ENCODE measurements at regions of chr15 and their contacts with region 1.

Region 1: DNA sequence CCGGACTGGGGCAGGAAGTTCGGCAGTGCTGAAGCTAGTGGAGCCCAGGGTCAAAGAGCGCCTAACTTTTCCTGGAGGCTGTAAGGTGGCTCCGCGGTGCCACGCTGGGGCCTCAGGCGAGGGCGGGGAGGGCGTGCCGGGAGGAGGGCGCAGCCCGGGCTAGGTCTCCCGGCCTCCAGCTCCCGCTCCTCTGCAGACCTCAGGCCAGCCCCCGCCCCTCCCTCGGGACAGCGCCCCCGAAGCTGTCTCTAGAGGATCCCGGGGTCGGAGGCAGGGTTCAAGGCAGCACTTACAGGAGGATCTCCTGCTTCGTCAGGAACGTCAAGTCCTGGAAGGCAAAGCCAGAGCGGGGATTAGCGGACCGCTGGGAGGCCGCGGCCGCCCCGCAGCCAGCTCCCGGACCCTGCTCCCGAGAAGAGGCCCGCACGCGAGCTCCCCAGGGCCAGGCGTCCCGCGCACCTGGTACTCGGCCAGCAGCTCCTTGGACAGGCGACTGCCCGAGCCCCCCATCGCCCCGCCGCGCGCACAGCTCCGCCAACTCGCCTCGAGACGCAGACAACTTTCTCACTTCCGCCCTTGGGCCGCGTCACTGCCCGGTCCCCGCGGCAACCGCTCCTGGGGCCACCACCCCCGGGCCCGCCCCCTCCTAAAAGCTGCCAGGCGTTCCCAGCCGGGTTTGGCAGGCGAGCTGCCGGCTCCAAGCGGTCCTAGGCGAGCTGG is at the start of gene CIB1:
- DNase-seq: peak; percentile 98
- H3K4me3 ChIP-seq: peak within 1 kb of the TSS; percentile 77 to 93 (median 82)
- H3K27ac ChIP-seq: peak within 1 kb of the TSS; percentile 69
- H3K4me1 ChIP-seq: peaks cover 18% of the 10 kb centered on the region
- H3K27me3 ChIP-seq: no peaks in the 10 kb centered on the region
- CTCF ChIP-seq: peak in 1 of 2 donors; percentile 34
- POLR2A ChIP-seq: peak; percentile 67
- total RNA-seq, gene CIB1: 58.3 and 61.0 TPM in 2 replicates

Region 2: GRCh38 chr15:90101969-90102890 is 131.3 kb before region 1 on chr15 and contains the start of gene IDH2:
- CTCF ChIA-PET with region 1: no interaction called
- POLR2A ChIA-PET with region 1: no interaction called
- dilution Hi-C with region 1: no loop called
- intact Hi-C with region 1: loop called (anchors 5 kb)
- DNase-seq: peak; percentile 87
- H3K4me3 ChIP-seq: peak within 1 kb of the TSS; percentile 72 to 83 (median 76)
- H3K27ac ChIP-seq: peak within 1 kb of the TSS; percentile 73
- H3K4me1 ChIP-seq: peaks cover 26% of the 10 kb centered on the region
- H3K27me3 ChIP-seq: no peaks in the 10 kb centered on the region
- CTCF ChIP-seq: no peak
- POLR2A ChIP-seq: peak; percentile 95
- total RNA-seq, gene IDH2: 127 and 133 TPM in 2 replicates

Region 3: DNA sequence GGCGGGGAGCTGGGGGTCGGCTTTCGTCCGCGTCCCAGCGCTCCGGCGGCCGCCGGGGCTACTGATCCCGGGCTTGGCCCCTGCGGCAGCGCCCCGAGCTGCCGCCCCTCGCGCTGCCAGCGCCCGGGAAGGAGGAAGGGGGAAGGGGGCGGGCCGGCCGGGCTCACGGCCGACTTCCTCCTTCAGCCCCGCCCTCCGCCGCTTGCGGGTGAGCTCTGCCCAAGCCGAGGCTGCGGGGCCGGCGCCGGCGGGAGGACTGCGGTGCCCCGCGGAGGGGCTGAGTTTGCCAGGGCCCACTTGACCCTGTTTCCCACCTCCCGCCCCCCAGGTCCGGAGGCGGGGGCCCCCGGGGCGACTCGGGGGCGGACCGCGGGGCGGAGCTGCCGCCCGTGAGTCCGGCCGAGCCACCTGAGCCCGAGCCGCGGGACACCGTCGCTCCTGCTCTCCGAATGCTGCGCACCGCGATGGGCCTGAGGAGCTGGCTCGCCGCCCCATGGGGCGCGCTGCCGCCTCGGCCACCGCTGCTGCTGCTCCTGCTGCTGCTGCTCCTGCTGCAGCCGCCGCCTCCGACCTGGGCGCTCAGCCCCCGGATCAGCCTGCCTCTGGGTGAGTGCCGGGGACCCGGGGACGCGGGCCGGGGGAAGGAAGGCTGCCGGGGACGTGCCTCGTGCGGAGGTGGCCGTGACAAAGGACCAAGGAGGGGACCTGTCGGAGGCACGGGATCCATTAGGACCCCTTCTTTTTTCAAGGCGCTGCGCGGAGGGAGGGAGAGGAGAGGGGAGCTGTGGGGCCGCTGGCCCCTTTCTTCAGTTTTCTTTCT is 32.2 kb before region 1 on chr15 and contains the start of gene SEMA4B:
- CTCF ChIA-PET with region 1: no interaction called
- POLR2A ChIA-PET with region 1: interaction called, 5 read pairs
- dilution Hi-C with region 1: no loop called
- intact Hi-C with region 1: loop called (anchors 1 kb)
- DNase-seq: peak; percentile 53
- H3K4me3 ChIP-seq: peak within 1 kb of the TSS; percentile 67 to 92 (median 77)
- H3K27ac ChIP-seq: no peak within 1 kb of the TSS
- H3K4me1 ChIP-seq: peaks cover 6% of the 10 kb centered on the region
- H3K27me3 ChIP-seq: no peaks in the 10 kb centered on the region
- CTCF ChIP-seq: no peak
- POLR2A ChIP-seq: peak; percentile 90
- total RNA-seq, gene SEMA4B: 7.1 and 7.8 TPM in 2 replicates

Region 4: DNA sequence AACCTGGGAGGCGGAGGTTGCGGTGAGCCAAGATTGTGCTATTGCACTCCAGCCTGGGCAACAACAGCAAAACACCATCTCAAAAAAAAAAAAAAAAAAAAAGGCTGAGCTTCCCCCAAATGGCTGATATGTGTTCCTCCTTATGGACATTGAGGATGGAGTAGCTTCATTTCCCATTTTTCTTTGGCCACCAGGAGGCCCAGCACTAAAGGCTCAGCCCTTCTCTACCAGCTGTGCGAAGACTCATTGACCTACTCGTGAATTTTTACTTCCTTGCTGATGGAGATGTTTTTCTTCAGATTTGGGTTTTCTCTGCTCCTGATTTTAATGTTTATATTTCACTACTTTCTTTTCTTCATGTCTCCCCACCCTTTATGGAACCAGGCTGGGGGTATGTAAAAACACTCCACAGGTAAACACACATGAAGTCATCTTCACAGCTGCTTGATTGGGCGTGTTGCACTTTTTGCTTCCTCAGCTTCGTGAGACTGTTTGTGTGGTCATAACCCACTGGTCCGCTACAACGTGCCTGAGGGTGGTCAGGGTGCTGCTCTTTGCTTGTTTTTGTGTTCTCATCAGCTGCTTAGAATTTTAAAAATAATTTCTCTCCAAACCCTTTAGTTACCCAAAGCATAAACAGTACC is 18.9 kb before region 1 on chr15:
- CTCF ChIA-PET with region 1: interaction called, 12 read pairs
- POLR2A ChIA-PET with region 1: no interaction called
- dilution Hi-C with region 1: no loop called
- intact Hi-C with region 1: no loop called
- DNase-seq: no peak
- H3K4me3 ChIP-seq: no peak overlapping the region
- H3K27ac ChIP-seq: no peak overlapping the region
- H3K4me1 ChIP-seq: peaks cover 12% of the 10 kb centered on the region
- H3K27me3 ChIP-seq: no peaks in the 10 kb centered on the region
- CTCF ChIP-seq: peak in 1 of 2 donors; percentile 36
- POLR2A ChIP-seq: no peak

Region 5: DNA sequence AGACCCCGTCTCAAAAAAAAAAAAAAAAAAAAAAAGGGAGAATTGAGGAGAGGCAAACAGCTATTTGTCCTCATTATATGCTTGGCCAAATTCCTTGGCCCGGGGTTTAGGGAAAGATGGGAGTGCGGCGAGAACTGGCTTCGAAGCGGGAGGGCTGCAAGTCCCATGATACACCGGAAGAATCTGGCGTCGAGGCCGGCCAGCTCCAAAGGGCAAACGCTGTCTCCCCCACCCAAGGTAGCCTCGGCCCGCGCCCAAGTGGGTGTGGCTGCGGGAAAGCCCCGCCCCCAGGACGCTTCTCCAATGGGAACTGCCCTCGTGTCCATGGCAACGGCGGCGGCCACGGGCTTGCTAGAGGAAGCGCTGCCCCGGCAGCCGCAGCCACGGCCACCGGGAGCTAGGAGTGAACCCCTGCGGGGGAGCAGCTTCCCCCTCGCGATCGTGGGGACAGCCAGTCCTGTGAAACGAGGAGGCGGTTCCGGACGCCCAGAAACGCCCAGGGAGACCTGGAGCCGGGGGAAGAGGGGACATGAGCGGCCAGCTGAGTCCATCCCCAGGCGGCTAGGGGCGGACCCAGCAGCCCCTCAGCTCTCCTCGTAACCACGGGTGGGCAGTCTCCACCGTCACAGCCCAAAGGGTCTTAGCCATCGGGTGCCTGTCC is 15.8 kb after region 1 on chr15 and contains the start of gene TTLL13:
- CTCF ChIA-PET with region 1: interaction called, 20 read pairs
- POLR2A ChIA-PET with region 1: interaction called, 5 read pairs
- dilution Hi-C with region 1: no loop called
- intact Hi-C with region 1: loop called (anchors 1 kb)
- DNase-seq: peak; percentile 87
- H3K4me3 ChIP-seq: peak within 1 kb of the TSS; percentile 49 to 75 (median 68)
- H3K27ac ChIP-seq: peak within 1 kb of the TSS; percentile 58
- H3K4me1 ChIP-seq: peaks cover 5% of the 10 kb centered on the region
- H3K27me3 ChIP-seq: no peaks in the 10 kb centered on the region
- CTCF ChIP-seq: peak in 1 of 2 donors; percentile 6
- POLR2A ChIP-seq: peak; percentile 73
- total RNA-seq, gene TTLL13: not detected in 2 replicates

Region 6: GRCh38 chr15:90265271-90266060 is 31.9 kb after region 1 on chr15 and contains the start of gene NGRN:
- CTCF ChIA-PET with region 1: interaction called, 8 read pairs
- POLR2A ChIA-PET with region 1: interaction called, 8 read pairs
- dilution Hi-C with region 1: no loop called
- intact Hi-C with region 1: loop called (anchors 1 kb)
- DNase-seq: peak; percentile 96
- H3K4me3 ChIP-seq: peak within 1 kb of the TSS; percentile 82 to 95 (median 85)
- H3K27ac ChIP-seq: peak within 1 kb of the TSS; percentile 76
- H3K4me1 ChIP-seq: peaks cover 55% of the 10 kb centered on the region
- H3K27me3 ChIP-seq: no peaks in the 10 kb centered on the region
- CTCF ChIP-seq: no peak
- POLR2A ChIP-seq: peak; percentile 96
- total RNA-seq, gene NGRN: 56.5 and 60.7 TPM in 2 replicates

Region 7: GRCh38 chr15:90286678-90287077 is 53.1 kb after region 1 on chr15:
- CTCF ChIA-PET with region 1: interaction called, 12 read pairs
- POLR2A ChIA-PET with region 1: no interaction called
- dilution Hi-C with region 1: no loop called
- intact Hi-C with region 1: no loop called
- DNase-seq: peak; percentile 62
- H3K4me3 ChIP-seq: no peak overlapping the region
- H3K27ac ChIP-seq: no peak overlapping the region
- H3K4me1 ChIP-seq: no peaks in the 10 kb centered on the region
- H3K27me3 ChIP-seq: no peaks in the 10 kb centered on the region
- CTCF ChIP-seq: peak; percentile 38 to 39
- POLR2A ChIP-seq: no peak

Region 8: GRCh38 chr15:90387537-90388461 is 154.3 kb after region 1 on chr15 and contains the start of gene IQGAP1:
- CTCF ChIA-PET with region 1: no interaction called
- POLR2A ChIA-PET with region 1: no interaction called
- dilution Hi-C with region 1: no loop called
- intact Hi-C with region 1: no loop called
- DNase-seq: peak; percentile 95
- H3K4me3 ChIP-seq: peak within 1 kb of the TSS; percentile 74 to 97 (median 95)
- H3K27ac ChIP-seq: peak within 1 kb of the TSS; percentile 88
- H3K4me1 ChIP-seq: peaks cover 30% of the 10 kb centered on the region
- H3K27me3 ChIP-seq: no peaks in the 10 kb centered on the region
- CTCF ChIP-seq: no peak
- POLR2A ChIP-seq: peak; percentile 91
- total RNA-seq, gene IQGAP1: 244 and 258 TPM in 2 replicates

Measured in endothelial cell of umbilical vein (primary cell).